HepG2 (cell line): ENCODE measurements at regions of chr17 and their contacts with region 1.

Region 1: GRCh38 chr17:81991684-81992305 is 14.4 kb downstream of the ASPSCR1 start:
- DNase-seq: peak; percentile 98
- ATAC-seq: peak; percentile 66
- H3K4me3 ChIP-seq: peak overlapping the region; percentile 29 to 69 (median 44)
- H3K27ac ChIP-seq: peak overlapping the region; percentile 97
- H3K4me1 ChIP-seq: peaks cover 70% of the 10 kb centered on the region
- H3K27me3 ChIP-seq: no peaks in the 10 kb centered on the region
- CTCF ChIP-seq: peak; percentile 77
- EP300 ChIP-seq: peak; percentile 3 to 66; a peak in 3 of 4 replicates
- POLR2A ChIP-seq: peak in 1 of 2 experiments; percentile 92; a peak in 2 of 4 replicates
- RAD21 ChIP-seq: peak; percentile 88

Region 2: DNA sequence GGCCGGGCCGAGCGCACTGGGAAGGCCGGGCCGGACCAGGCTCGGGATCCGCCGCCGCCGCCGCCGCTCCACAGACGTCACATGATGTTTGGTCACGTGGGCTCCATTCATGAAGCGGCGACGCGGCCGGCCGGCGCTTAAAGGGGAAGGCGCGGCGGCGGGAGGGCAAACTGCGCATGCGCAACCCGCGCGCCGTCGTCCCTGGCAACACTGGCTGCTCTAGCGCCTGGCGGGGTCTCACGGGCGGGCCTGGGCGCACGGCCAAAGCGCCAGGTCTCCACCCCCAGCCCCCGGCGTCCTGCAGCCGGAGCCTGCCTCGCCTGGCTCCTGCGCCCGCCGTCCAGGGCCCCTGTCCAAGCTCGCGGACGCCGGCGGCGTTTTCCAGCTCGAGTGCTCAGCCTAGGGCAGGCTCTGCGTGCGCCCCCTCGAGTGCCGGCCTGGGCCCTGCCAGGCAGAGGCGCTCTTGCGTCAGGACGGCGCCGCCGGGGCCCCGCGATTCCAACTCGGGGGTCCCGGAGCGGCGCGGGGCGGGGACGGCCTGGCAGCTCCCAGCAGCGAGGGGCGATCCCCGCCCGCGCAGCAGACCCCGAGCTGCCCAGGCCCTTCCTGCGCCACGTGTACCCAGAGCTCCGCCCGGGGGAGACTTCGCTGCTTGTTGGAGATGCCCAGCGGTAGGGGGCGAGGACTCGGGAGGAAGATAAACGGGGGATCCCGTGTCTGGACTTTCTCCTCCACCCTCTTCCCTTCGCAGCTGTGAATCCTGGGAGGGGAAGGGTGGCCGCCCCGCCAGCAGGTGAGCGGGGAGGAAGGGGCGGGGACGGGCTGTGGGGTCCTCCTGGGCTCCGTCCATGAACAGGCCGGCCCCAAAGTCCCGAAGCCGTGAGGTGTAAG is 63.9 kb before region 1 on chr17 and contains the start of gene MAFG:
- CTCF ChIA-PET with region 1: no interaction called
- POLR2A ChIA-PET with region 1: interaction called, 30 read pairs
- in situ Hi-C with region 1: no loop called
- intact Hi-C with region 1: no loop called
- DNase-seq: peak; percentile 94
- ATAC-seq: peak; percentile 46
- H3K4me3 ChIP-seq: peak within 1 kb of the TSS; percentile 79 to 94 (median 91)
- H3K27ac ChIP-seq: peak within 1 kb of the TSS; percentile 92
- H3K4me1 ChIP-seq: peaks cover 64% of the 10 kb centered on the region
- H3K27me3 ChIP-seq: no peaks in the 10 kb centered on the region
- CTCF ChIP-seq: peak; percentile 73
- EP300 ChIP-seq: 0 out of 4 replicates have a peak, but pooled peaks of 1 of the 2 experiments have one; percentile 11
- POLR2A ChIP-seq: peak in 1 of 2 experiments; percentile 31; a peak in 1 of 4 replicates
- RAD21 ChIP-seq: peak; percentile 85
- total RNA-seq, gene MAFG: 12.4 and 14.5 TPM in 2 replicates

Region 3: DNA sequence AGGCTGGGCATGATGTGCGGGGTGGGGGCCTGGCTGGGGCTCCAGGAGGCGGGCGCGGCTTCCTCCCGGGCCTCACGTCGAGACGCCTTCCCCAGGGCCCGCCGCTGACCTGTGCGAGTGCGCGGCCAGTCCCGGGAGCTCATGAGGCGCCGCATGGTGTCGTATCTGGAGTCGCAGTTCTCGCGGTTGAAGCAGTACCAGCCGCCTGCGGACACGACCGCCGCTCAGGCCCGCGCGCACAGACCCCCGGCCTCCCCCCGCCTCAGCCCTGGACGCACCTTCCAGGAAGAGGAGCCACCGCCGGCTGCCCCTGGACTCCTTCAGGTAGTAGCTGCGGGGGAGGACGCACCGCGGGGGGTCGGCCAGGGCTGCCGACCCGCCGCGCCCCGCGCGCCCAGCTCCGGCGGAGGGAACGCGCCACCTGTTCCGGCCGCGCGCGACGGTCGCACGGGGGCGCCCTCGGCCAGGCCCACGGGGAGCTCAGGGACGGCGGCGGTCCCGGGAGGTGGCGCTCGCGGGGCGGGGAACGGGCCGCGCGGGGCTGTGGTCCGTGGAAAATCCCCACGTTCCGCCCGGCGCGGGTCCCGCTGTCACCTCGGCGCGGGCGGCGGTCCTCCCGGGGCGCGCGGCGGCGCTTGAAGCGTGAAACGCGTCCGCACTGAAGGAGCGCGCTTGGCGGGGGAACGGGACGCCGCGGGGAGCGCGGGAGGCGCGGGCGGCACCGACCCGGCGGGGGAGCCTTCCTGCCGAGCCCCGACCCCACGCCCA is 32.2 kb before region 1 on chr17:
- CTCF ChIA-PET with region 1: interaction called, 73 read pairs
- POLR2A ChIA-PET with region 1: interaction called, 406 read pairs
- in situ Hi-C with region 1: loop called (anchors 5 kb)
- intact Hi-C with region 1: loop called (anchors 2 kb)
- DNase-seq: peak; percentile 40
- ATAC-seq: peak; percentile 49
- H3K4me3 ChIP-seq: peak overlapping the region; percentile 95 to 97 (median 96)
- H3K27ac ChIP-seq: peak overlapping the region; percentile 86
- H3K4me1 ChIP-seq: peaks cover 70% of the 10 kb centered on the region
- H3K27me3 ChIP-seq: no peaks in the 10 kb centered on the region; a peak in 1 of 5 replicates
- CTCF ChIP-seq: peak; percentile 80
- EP300 ChIP-seq: peak in 1 of 2 experiments; percentile 5; a peak in 1 of 4 replicates
- POLR2A ChIP-seq: no peak
- RAD21 ChIP-seq: peak; percentile 100

Region 4: DNA sequence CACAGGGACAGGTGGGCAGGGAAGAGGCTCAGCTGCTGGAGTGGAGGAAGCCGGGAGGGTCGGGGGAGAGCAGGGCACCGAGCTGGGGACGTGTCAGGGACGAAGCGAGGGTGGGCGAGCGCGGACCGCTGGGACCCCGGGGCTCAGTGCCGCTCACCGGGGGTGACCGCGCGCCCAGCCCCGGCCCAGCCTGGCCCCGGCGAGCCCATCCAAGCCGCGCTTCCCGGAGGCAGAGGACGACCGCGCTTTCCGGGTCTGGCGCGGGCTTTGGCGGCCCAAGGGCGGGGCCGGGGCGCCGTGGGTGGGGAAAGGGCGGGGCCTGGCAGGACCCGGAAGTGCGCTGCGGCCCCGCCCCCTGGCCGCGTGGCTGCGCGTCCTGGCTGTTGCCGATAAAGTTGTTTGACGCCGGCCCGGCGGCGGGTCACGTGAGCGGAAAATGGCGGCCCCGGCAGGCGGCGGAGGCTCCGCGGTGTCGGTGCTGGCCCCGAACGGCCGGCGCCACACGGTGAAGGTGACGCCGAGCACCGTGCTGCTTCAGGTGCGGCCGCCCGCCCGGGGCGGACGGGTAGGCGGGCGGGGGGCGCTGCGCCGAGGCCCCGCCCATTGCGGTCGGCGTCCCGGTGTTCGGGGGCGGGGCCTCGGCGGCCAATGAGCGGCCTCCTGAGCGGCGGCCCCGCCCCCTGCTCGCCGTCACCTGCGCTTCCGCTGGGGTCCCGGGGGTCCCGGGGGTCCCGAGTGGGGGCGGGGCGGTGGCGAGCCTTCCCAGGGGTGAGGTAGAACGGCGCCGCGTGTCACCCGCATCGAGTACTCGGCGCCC is 14.4 kb before region 1 on chr17 and contains the start of gene ASPSCR1:
- CTCF ChIA-PET with region 1: interaction called, 3 read pairs
- POLR2A ChIA-PET with region 1: interaction called, 382 read pairs
- in situ Hi-C with region 1: no loop called
- intact Hi-C with region 1: loop called (anchors 1 kb)
- DNase-seq: peak; percentile 80
- ATAC-seq: peak; percentile 85
- H3K4me3 ChIP-seq: peak within 1 kb of the TSS; percentile 86 to 92 (median 87)
- H3K27ac ChIP-seq: peak within 1 kb of the TSS; percentile 85
- H3K4me1 ChIP-seq: peaks cover 56% of the 10 kb centered on the region
- H3K27me3 ChIP-seq: no peaks in the 10 kb centered on the region
- CTCF ChIP-seq: no peak; the same call in 1 of the 2 replicates
- EP300 ChIP-seq: peak; percentile 23 to 69; a peak in 3 of 4 replicates
- POLR2A ChIP-seq: peak; percentile 68 to 95
- RAD21 ChIP-seq: peak; percentile 81
- total RNA-seq, gene ASPSCR1: 221 and 314 TPM in 2 replicates

Region 5: DNA sequence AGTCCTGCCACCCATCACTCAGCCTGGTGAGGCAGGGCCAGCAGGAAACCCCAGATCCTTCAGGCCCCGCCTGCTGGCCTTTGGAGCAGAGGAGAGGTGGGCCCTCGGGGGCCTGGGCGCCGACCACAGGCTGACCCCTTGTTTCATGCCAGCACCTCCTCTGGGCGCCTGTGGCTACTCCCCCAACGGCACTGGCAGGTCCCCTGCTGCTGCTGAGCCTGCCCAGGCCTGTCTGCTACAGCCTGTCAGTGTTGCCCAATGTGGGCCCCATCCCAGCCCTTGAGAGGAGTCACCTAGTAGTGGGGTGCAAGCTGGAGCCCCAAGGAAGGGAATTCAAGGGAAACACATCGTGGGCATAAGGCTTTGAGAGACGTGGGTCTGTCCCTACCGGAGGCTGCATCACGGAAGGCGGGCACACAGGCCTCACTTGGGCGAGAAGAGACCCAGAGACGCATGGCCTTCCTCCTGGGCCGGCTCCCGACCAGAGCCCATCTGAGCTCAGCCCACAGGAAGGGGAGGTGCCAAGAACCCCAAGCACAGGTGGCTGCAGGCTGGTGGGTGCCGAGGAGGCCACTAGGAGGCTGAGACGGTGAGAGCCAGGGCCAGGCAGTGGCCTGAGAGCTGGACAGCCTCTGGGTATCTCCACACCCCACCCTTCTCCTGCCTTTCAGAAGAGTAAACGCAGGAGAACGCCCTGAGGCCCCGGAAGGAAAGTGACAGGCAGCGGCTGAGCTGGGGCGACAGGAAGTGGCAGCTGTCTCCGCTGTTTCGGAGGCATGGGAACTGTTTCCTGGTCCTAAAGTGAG is 114.3 kb after region 1 on chr17:
- CTCF ChIA-PET with region 1: no interaction called
- POLR2A ChIA-PET with region 1: interaction called, 14 read pairs
- in situ Hi-C with region 1: no loop called
- intact Hi-C with region 1: no loop called
- DNase-seq: peak; percentile 94
- ATAC-seq: peak; percentile 80
- H3K4me3 ChIP-seq: peak overlapping the region; percentile 56 to 82 (median 57)
- H3K27ac ChIP-seq: peak overlapping the region; percentile 72
- H3K4me1 ChIP-seq: peaks cover 79% of the 10 kb centered on the region
- H3K27me3 ChIP-seq: no peaks in the 10 kb centered on the region
- CTCF ChIP-seq: peak; percentile 92
- EP300 ChIP-seq: peak in 1 of 2 experiments; percentile 50; a peak in 1 of 4 replicates
- POLR2A ChIP-seq: peak in 1 of 2 experiments; percentile 94; a peak in 2 of 4 replicates
- RAD21 ChIP-seq: peak; percentile 80

Region 6: GRCh38 chr17:82303944-82304808 is 312.4 kb after region 1 on chr17:
- CTCF ChIA-PET with region 1: no interaction called
- POLR2A ChIA-PET with region 1: no interaction called
- in situ Hi-C with region 1: no loop called
- intact Hi-C with region 1: no loop called
- DNase-seq: no peak
- ATAC-seq: peak; percentile 42
- H3K4me3 ChIP-seq: peak overlapping the region in 1 of 3 experiments; percentile 59; a peak in 1 of 6 replicates
- H3K27ac ChIP-seq: no peak overlapping the region
- H3K4me1 ChIP-seq: peaks cover 73% of the 10 kb centered on the region
- H3K27me3 ChIP-seq: no peaks in the 10 kb centered on the region
- CTCF ChIP-seq: no peak
- EP300 ChIP-seq: no peak
- POLR2A ChIP-seq: no peak
- RAD21 ChIP-seq: no peak